Dorsolateral prefrontal cortex (tissue), 120 donors: ENCODE measurements at regions of chr3 and their contacts with region 1.

Region 1: DNA sequence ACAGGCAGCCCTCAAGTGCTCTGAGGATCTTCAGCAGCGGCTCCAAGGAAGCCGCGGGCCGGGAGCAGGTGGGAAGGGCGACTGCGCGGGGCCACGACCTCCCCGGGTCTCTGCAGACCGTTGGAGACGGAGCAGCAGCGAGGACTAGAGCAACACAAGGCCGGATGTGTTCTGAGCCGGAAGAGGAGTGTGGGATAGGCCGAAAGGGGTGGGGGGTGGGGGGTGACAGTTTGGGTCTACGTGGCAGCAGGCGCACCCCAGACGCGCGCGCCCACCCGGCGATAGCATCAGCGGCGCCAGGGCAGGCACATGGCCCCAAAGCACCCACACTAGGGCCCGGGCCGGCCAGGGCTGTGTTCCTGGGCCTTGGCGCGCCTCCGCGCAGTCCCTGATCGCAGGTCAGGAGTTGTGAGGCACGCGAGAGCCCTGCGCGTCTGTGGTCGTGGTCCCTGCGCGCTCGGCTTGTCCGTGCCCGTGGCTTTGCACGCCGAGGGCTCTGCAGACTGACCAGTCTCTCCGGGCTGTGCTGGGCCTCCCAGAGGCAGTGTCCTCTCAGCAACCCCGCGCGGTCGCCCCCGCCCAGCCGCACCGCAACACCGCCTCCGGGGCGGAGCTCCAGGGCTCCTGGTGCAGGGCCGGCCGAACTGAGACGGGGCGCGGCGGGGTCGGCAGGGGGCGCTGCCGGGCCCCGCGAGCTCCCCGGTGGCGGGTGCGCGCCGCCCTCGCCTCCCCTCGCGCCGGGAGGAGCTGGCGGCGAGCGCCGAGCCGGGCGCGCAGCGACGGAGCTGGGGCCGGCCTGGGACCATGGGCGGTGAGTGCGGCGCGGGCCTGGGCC is at the start of gene PXYLP1:
- DNase-seq: peak; percentile 84 to 95 (median 91)
- H3K4me3 ChIP-seq: peak within 1 kb of the TSS; percentile 66 to 99 (median 84)
- H3K27ac ChIP-seq: peak within 1 kb of the TSS in 58 of 59 donors; percentile 29 to 95 (median 90)
- H3K27me3 ChIP-seq: no peaks in the 10 kb centered on the region
- CTCF ChIP-seq: peak; percentile 18 to 87 (median 69)
- total RNA-seq, gene PXYLP1: 19.8 to 55.1 (median 36.4) TPM

Region 2: DNA sequence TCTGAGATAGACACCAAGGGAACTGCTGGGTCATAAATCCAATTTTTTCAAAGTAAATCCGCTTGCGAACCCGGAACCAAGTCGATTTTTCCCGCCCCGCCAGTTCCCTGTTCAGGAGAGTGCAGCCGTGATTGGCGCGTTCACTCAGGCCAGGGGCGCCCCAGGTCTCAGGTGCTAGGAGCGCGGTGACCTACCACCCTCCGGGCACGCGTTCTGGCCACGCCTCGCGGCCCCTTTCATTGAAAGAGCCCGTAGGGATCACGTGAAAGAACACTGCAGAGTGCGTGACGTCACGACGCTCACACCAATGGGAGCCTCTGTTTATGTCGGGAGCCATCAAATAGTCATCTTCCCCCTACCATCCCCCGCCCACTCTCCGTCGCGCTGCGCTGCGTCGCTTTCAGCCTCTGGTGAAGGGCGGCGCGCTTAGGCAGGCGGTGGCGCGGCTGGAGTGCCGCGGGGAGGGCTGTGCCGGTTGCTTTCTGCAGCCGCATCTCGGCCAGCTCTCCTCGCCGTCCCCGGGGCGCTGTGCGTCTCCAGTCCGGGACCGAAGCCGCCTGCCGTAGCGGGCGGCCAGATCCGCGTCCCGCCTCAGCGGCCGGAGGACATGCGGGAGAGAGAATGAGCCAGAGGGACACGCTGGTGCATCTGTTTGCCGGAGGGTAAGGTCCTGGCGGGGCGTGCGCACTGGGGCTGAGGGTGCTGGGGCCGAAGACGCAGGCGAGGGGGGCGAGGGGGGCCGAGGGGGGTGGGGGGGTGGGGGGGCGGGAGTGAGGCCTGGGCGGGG is 289.7 kb before region 1 on chr3 and contains the start of gene SLC25A36:
- intact Hi-C with region 1: loop called in 1 of 2 experiments (anchors 5 kb)
- DNase-seq: peak; percentile 93 to 98 (median 96)
- H3K4me3 ChIP-seq: peak within 1 kb of the TSS; percentile 58 to 97 (median 90)
- H3K27ac ChIP-seq: peak within 1 kb of the TSS; percentile 68 to 98 (median 93)
- H3K27me3 ChIP-seq: no peaks in the 10 kb centered on the region
- CTCF ChIP-seq: peak in 44 of 56 donors; percentile 9 to 68 (median 37)
- total RNA-seq, gene SLC25A36: 48.1 to 113 (median 82.6) TPM

Region 3: GRCh38 chr3:141279077-141279967 is 48.0 kb after region 1 on chr3:
- intact Hi-C with region 1: loop called in 1 of 2 experiments (anchors 5 kb)
- DNase-seq: peak in 1 of 10 donors; percentile 11
- H3K4me3 ChIP-seq: peak overlapping the region in 7 of 59 donors; percentile 3 to 40 (median 12)
- H3K27ac ChIP-seq: peak overlapping the region in 23 of 59 donors; percentile 1 to 71 (median 33)
- H3K27me3 ChIP-seq: no peaks in the 10 kb centered on the region
- CTCF ChIP-seq: peak; percentile 25 to 72 (median 59)

Region 4: DNA sequence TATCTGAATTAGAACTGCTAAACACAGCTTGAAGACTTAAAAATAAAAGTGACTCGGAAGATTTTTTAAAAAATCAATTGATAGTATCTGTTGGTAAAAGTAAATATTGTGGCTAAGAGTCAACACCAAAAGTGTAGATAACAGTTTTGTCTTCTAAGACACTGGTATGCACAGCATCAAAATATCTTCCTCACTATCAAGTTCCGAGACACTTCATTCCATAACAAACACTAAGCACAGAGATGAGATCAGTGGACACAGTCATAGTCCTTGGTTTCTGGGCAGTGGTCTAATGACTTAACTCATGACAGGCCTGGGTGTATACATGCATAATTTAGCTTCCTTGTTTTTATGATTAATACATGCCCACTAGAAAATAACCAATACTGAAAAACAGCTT is 63.5 kb after region 1 on chr3:
- intact Hi-C with region 1: loop called (anchors 5 kb)
- DNase-seq: no peak
- H3K4me3 ChIP-seq: peak overlapping the region in 58 of 59 donors; percentile 18 to 66 (median 43)
- H3K27ac ChIP-seq: peak overlapping the region in 16 of 59 donors; percentile 2 to 65 (median 40)
- H3K27me3 ChIP-seq: no peaks in the 10 kb centered on the region
- CTCF ChIP-seq: no peak

Region 5: DNA sequence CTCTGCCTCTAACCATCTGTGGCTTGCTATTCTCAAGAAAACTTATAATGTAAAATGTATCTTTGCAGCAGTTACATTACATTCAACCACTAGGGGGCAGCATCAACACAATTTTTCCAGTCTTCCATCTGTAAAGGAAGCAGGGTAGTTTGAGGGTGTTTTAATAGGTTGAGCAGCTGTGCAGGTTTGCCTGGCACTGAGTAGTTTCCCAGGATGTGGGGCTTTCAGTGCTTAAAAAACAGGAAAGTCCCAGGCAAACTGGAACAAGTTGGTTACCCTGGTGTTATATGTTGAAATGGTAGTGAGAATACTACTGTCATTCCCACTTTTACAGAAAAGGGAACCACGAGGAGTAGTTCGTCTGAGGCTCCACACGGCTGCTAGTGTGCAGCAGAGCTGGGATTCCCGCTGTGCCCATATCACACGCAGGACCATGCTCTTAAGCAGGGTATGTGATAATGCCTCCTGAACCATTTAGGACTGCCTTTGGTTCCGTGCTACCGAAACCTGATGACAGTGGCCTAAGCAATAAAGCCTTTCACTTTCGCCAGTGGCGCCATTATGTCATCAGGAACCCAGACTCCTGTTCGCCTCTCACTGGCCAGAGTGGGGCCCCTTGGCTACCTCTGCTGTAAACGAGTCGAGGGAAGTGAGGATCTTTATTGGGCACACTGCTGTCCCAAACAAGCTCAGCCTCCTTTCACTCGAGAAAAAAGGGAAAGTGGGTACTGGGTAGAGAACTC is 72.3 kb after region 1 on chr3:
- intact Hi-C with region 1: loop called in 1 of 2 experiments (anchors 5 kb)
- DNase-seq: peak in 2 of 10 donors; percentile 58 to 60
- H3K4me3 ChIP-seq: peak overlapping the region in 1 of 59 donors; percentile 2
- H3K27ac ChIP-seq: peak overlapping the region in 9 of 59 donors; percentile 1 to 52 (median 25)
- H3K27me3 ChIP-seq: no peaks in the 10 kb centered on the region
- CTCF ChIP-seq: peak; percentile 70 to 99 (median 88)

Region 6: DNA sequence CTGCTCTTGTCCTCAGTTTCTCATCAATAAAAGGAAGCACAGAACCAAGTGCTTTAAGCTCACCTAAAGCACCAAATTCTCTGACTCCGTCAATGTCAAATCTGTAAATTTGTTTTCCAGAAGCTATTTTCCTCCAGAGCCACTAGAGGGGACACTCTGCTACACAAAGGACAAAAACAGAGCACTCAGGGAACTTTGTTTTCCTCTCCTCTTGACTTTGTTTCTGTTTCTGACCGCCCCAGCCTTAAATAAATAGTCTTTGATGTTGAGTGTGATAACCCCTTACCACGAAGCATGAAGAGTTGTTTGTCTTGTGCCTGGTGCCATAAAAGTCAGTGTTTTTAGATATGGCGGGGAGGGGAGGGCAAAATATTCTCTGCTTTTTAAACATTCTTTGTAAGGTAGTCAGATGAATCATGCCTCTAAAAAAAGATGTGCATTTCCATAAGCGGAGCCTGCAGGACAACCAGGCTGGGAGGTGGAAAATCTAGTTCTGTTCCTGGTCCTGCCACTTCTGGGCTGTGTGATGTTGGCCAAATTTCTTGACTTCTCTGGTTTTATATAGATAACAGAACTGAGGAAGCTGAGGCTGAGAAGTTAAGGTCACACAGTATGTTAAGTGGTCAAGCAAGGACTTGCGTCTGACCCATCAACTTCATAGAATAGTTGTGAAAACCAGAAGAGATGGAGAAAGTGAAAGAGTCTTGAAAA is 129.7 kb after region 1 on chr3:
- intact Hi-C with region 1: loop called in 1 of 2 experiments (anchors 10 kb)
- DNase-seq: no peak
- H3K4me3 ChIP-seq: peak overlapping the region in 38 of 59 donors; percentile 1 to 53 (median 32)
- H3K27ac ChIP-seq: peak overlapping the region in 49 of 59 donors; percentile 1 to 82 (median 55)
- H3K27me3 ChIP-seq: no peaks in the 10 kb centered on the region
- CTCF ChIP-seq: peak; percentile 47 to 91 (median 83)